ENCODE measurements at regions of chr6 and their contacts with region 1.

Region 1: GRCh38 chr6:8000188-8000596 is 64.0 kb downstream of the BLOC1S5 start:
- DNase-seq: peak; percentile 99
- H3K4me3 ChIP-seq: no peak overlapping the region
- H3K27ac ChIP-seq: peak overlapping the region; percentile 96
- H3K4me1 ChIP-seq: peaks cover 89% of the 10 kb centered on the region
- H3K27me3 ChIP-seq: no peaks in the 10 kb centered on the region
- CTCF ChIP-seq: no peak
- POLR2A ChIP-seq: peak; percentile 87

Region 2: DNA sequence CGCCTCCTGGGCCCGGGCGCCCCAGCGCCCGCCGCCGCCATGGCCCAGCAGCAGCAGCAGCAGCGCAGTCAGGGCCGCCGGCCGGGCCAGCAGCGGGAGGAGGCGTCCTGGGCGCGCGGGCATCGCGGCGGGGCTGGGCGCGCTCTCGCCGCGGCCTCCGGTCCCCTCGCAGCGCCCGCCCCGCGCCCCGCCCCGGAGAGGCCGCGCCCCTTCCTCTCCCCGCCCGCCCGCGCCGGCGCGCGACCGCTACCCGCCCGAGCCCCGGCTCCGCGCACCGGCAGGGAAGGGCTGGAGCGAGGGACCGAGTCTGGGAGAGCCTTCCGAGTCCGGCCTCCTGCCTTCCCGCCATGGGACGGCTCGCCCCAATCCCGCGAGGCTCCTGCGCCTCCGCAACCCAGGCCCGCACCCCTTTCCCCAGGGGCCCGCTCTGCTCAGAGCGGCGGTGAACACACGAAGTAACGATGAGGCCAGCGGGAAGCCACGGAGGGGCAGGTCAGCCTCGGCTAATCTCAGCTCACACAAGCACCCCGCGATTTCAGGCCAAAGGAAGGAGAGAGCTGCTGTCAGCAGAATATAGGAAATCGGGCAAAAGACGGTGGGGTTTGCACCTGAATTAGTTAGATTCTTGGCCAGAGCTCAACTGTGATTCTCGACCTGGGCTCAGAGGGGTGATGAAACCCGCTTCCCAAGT is 89.4 kb before region 1 on chr6 and contains the start of gene TXNDC5:
- CTCF ChIA-PET with region 1: interaction called, 22 read pairs
- POLR2A ChIA-PET with region 1: interaction called, 22 read pairs
- dilution Hi-C with region 1: no loop called
- intact Hi-C with region 1: loop called (anchors 1 kb)
- DNase-seq: peak; percentile 77
- H3K4me3 ChIP-seq: peak within 1 kb of the TSS; percentile 70 to 97 (median 76)
- H3K27ac ChIP-seq: peak within 1 kb of the TSS; percentile 94
- H3K4me1 ChIP-seq: peaks cover 45% of the 10 kb centered on the region
- H3K27me3 ChIP-seq: no peaks in the 10 kb centered on the region
- CTCF ChIP-seq: no peak
- POLR2A ChIP-seq: peak; percentile 76
- total RNA-seq, gene TXNDC5: 1,581 and 1,665 TPM in 2 replicates